ENCODE measurements at regions of chr5 and their contacts with region 1.

Region 1: DNA sequence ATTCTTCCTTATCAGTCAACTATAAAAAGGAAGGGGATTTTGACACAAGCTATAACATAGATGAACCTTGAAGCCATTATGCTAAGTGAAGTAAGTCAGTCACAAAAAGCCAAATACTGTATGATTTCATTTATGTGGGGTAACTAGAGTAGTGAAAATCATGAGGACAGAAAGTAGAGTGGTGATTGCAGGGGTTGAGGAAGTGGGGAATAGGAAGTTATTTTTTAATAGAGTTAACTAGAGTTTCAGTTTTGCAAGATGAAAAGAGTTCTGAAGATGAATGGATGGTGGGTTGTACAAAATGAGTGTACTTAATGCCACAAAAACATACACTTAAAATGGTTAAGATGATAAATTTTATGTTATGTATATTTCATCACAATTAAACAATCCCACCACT is 65.4 kb upstream of the FAM174A start:
- DNase-seq: no peak
- ATAC-seq: no peak
- H3K4me3 ChIP-seq: no peak overlapping the region
- H3K27ac ChIP-seq: no peak overlapping the region
- H3K4me1 ChIP-seq: no peaks in the 10 kb centered on the region
- H3K27me3 ChIP-seq: no peaks in the 10 kb centered on the region
- CTCF ChIP-seq: no peak

Region 2: DNA sequence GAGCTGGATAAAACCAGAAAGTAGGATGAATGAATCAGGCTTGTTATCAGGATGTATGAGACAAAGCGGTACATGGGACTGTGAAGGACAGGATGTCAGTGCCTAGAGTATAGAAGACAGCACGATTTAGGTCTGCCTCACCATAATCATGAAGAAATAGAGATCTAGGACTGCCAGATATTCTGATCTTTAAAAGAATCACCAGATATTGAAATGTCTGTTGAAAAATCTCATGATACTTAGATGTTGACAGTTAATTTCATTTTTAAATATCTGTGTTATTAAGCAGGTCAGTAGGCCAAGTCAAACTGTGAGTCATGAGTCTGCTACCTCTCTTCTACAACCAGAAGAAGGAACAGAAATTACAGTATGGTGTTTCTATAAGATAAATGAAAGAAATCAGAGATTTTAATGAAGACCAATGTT is 368.3 kb after region 1 on chr5:
- CTCF ChIA-PET with region 1: interaction called, 11 read pairs
- POLR2A ChIA-PET with region 1: no interaction called
- intact Hi-C with region 1: no loop called
- DNase-seq: peak; percentile 28
- ATAC-seq: peak; percentile 50
- H3K4me3 ChIP-seq: no peak overlapping the region
- H3K27ac ChIP-seq: no peak overlapping the region
- H3K4me1 ChIP-seq: peaks cover 45% of the 10 kb centered on the region
- H3K27me3 ChIP-seq: no peaks in the 10 kb centered on the region
- CTCF ChIP-seq: no peak

Region 3: DNA sequence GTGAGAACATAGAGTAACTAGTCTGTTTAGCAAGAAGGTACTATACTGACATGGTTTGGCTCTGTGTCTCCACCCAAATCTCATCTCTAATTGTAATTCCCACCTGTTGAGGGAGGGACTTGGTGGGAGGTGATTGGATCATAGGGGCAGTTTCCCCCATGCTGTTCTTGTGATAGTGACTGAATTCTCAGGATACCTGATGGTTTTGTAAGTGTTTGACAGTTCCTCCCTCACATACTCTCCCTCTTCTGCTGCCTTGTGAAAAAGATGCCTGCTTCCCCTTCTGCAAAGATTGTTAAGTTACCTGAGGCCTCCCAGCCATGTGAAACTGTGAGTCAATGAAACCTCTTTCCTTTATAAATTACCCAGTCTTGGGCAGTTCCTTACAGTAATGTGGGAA is 673.8 kb after region 1 on chr5:
- CTCF ChIA-PET with region 1: no interaction called
- POLR2A ChIA-PET with region 1: no interaction called
- intact Hi-C with region 1: no loop called
- DNase-seq: no peak
- ATAC-seq: no peak
- H3K4me3 ChIP-seq: no peak overlapping the region
- H3K27ac ChIP-seq: no peak overlapping the region
- H3K4me1 ChIP-seq: no peaks in the 10 kb centered on the region
- H3K27me3 ChIP-seq: no peaks in the 10 kb centered on the region
- CTCF ChIP-seq: no peak

Region 4: GRCh38 chr5:101687349-101687985 is 1217.7 kb after region 1 on chr5:
- CTCF ChIA-PET with region 1: no interaction called
- POLR2A ChIA-PET with region 1: no interaction called
- intact Hi-C with region 1: no loop called
- DNase-seq: peak; percentile 37
- ATAC-seq: peak; percentile 64
- H3K4me3 ChIP-seq: no peak overlapping the region
- H3K27ac ChIP-seq: no peak overlapping the region
- H3K4me1 ChIP-seq: no peaks in the 10 kb centered on the region
- H3K27me3 ChIP-seq: no peaks in the 10 kb centered on the region
- CTCF ChIP-seq: no peak

Measured in PC-3 (cell line).